Activated CD4-positive, alpha-beta T cell treated with anti-CD3 and anti-CD28 coated beads for 36 hours (primary cell): ENCODE measurements at regions of chr1 and their contacts with region 1.

Region 1: DNA sequence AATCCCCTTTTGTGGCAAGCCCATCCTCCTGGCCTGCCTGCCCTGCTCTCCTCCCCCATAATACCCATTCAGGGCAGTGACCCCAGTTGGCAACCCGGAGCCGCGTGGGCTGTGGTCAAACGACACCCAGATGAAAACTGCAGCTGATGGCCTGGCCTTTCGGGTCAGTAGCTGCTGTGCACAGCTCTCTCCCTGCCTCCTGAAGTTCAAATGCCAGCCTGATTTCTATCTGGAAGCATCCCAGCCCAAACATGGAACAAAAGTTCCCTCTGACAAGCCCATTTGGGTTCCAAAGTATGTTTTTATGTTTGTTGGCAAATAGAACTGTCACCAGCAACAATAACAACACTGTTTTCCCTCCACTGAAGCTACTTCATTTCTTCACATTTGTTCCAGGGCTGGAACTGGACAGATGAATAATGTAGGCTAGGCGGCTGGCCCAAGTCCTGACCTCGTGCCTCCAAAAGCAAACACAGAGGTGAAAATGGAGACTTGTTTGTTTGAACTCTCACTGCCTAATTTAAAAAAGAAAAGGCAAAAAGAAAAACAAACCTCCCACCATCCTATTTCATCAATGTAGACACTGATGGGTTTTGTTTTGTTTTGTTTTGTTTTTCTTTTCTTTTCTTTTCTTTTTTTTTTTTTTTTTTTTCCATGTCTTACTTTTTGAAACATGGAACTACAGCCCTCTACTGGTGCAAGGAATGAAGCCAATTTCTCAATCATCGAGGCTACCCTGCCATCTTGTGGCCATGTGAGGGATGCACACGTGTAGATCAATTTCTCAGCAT is 179.0 kb downstream of the ADSS2 start:
- DNase-seq: peak; percentile 80
- ATAC-seq: peak; percentile 90
- H3K4me3 Mint-ChIP-seq: no peak overlapping the region
- H3K27ac Mint-ChIP-seq: no peak overlapping the region
- H3K4me1 Mint-ChIP-seq: peaks cover 9% of the 10 kb centered on the region
- H3K27me3 Mint-ChIP-seq: no peaks in the 10 kb centered on the region

Region 2: DNA sequence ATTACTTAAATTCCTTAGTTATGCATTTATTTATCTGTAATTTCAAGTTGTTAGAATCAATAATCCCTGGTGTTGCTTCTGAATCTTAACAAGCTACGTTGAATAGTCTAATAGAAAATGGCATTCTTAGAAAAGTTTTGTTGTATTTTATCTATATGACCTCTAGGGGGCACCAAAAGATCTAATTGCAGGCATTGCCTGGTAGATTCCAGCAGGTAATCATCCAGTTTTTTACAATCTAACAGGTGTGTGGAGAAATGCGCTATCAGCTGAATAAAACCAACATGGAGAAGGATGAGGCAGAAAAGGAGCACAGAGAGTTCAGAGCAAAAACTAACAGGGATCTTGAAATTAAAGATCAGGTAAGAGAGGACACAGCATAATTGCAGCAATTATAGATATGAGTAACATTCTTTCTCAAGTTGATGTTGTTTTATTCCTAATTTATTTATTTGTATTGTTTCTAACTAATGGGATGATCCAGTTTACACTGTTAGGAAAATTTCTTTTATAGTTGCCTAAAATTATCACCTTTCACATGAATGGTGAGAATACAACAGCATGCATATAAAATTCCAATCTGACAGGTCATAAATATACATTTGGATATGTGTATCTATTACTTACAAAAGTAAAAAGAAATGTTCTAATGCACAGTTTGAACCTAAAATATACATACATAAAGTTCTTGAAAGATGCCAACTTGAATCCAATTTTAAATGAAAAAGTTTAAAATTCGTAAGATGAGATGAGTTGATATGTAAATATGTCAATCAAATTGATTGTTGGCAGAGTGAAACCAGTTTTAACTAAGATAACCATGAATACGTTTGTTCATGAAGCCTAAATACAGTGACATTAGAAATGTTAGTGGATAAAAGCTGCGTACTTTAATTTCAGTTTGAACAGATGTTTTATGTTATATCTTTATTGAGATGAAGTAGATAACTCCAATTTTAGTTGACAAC is 928.4 kb before region 1 on chr1:
- CTCF ChIA-PET with region 1: interaction called, 7 read pairs
- POLR2A ChIA-PET with region 1: no interaction called
- intact Hi-C with region 1: loop called (anchors 1 kb)
- DNase-seq: no peak
- ATAC-seq: no peak
- H3K4me3 Mint-ChIP-seq: no peak overlapping the region
- H3K27ac Mint-ChIP-seq: no peak overlapping the region
- H3K4me1 Mint-ChIP-seq: peaks cover 6% of the 10 kb centered on the region
- H3K27me3 Mint-ChIP-seq: no peaks in the 10 kb centered on the region

Region 3: DNA sequence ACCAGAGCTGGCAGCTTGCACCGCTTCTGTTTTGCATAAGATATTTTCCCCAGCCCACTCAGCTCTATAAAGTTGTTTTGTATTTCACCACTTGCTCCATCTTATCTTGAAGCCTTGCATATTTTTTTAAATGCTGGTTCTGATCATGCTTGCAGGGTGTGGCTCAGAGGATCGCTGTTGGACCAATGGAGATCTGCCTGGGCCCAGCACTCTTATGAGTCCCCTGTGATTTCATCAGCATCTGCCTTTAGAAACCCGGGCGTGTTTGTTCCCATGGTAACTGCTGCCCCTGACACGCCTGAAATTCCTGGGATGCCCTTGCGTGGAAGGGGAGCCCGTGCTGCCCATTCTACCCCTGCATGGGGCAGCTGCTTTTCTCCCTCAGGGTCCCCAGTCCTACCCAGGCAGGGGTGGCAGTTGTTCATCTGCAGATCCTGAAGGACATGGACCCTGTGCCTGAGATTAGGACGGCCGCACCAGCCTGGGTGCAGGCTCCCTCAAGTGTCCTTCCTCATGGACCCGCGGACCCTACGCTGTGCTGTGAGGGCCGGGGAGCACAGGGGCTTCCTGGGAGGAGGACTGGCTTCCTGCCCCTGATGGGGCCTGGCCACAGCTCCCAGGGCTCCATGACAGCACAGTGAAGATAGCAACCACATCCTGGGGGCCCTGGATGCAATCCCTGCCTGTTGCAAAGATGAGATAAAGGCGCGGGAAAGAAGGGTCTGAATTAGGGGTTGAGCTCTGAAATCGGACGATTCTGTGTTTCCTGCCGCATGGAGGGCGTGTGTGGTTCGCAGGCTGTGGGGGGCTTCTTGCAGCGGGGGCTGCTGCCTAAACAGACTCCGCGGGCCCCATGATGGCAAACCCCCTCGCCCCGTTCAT is 790.3 kb before region 1 on chr1:
- CTCF ChIA-PET with region 1: no interaction called
- POLR2A ChIA-PET with region 1: no interaction called
- intact Hi-C with region 1: loop called (anchors 10 kb)
- DNase-seq: peak; percentile 33
- ATAC-seq: peak; percentile 50
- H3K4me3 Mint-ChIP-seq: peak overlapping the region; percentile 54
- H3K27ac Mint-ChIP-seq: no peak overlapping the region
- H3K4me1 Mint-ChIP-seq: peaks cover 17% of the 10 kb centered on the region
- H3K27me3 Mint-ChIP-seq: no peaks in the 10 kb centered on the region

Region 4: DNA sequence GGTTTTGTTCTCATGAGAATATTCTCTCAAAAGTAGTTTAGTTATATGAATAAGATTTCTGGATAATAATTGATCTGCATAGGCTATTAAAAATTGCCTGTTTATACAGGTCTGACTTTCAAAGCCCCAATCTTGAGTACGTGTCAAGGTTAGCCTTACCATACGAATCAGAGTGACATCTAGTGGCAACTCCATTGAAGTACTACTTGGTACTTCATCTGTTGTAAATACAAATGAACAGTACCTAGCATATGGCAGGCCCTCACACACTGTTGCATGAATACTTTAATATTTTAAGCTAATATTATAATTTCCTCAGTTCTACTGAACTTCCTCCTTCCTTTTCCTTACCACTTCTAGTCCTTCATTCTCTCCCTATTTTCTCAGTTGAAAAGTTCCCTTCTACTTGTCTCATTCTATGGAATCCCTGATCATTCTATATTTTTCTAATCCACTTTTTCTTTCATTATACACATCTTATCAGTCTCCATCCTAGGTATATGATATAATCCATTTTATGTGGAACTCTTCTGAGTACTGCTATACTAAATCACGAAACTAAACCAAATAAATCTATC is 523.9 kb before region 1 on chr1:
- CTCF ChIA-PET with region 1: no interaction called
- POLR2A ChIA-PET with region 1: no interaction called
- intact Hi-C with region 1: loop called in 1 of 2 experiments (anchors 2 kb)
- DNase-seq: no peak
- ATAC-seq: peak; percentile 98
- H3K4me3 Mint-ChIP-seq: no peak overlapping the region
- H3K27ac Mint-ChIP-seq: no peak overlapping the region
- H3K4me1 Mint-ChIP-seq: peaks cover 28% of the 10 kb centered on the region
- H3K27me3 Mint-ChIP-seq: no peaks in the 10 kb centered on the region

Region 5: DNA sequence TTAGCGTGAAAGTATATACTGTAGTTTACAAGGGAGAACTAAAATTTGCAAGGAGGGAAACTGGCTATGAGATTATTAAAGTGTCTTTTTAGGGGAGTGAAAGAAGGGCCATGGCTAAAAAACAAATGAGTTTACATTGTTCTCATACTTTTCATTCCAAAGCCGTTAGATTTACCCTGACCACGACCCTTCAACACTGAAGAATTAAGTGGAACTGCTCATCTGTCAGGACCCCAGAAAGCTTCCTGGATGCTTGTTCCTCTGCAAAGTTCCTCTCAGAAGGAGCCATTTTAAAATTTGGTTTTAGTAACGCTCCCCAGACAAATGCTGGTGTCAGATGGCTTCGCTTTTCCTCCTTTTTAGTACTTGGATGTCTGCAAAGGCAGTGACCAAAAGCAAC is 304.3 kb before region 1 on chr1:
- CTCF ChIA-PET with region 1: interaction called, 3 read pairs
- POLR2A ChIA-PET with region 1: no interaction called
- intact Hi-C with region 1: loop called in 1 of 2 experiments (anchors 10 kb)
- DNase-seq: no peak
- ATAC-seq: no peak
- H3K4me3 Mint-ChIP-seq: no peak overlapping the region
- H3K27ac Mint-ChIP-seq: no peak overlapping the region
- H3K4me1 Mint-ChIP-seq: no peaks in the 10 kb centered on the region
- H3K27me3 Mint-ChIP-seq: no peaks in the 10 kb centered on the region

Region 6: GRCh38 chr1:244217711-244218110 is 55.0 kb before region 1 on chr1:
- CTCF ChIA-PET with region 1: no interaction called
- POLR2A ChIA-PET with region 1: no interaction called
- intact Hi-C with region 1: no loop called
- DNase-seq: no peak
- ATAC-seq: no peak
- H3K4me3 Mint-ChIP-seq: no peak overlapping the region
- H3K27ac Mint-ChIP-seq: no peak overlapping the region
- H3K4me1 Mint-ChIP-seq: no peaks in the 10 kb centered on the region
- H3K27me3 Mint-ChIP-seq: no peaks in the 10 kb centered on the region